ENCODE measurements at regions of chr3 and their contacts with region 1.

Region 1: DNA sequence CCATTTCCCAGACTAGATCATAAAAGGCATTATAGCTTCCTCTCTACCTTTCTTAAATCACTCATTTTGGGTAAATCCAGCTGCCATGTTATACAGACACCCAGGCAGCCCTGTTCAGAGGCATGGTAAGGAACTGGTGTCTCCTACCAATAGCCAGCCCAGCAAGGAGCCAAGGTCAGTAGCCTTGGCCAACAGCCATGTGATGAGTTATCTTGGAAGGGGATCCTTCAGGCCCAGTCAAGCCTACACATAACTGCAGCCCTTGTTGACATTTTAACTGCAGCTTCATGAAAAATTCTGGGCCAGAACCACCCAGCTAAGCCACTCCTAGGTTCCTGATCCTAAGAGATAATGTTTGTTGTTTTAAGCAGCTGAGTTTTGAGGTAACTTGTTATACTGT is 29.0 kb upstream of the ZMAT3 start:
- DNase-seq: peak; percentile 50
- ATAC-seq: peak; percentile 68
- H3K4me3 ChIP-seq: no peak overlapping the region
- H3K27ac ChIP-seq: no peak overlapping the region
- H3K4me1 ChIP-seq: 0 out of 2 replicates have a peak, but pooled peaks cover 4% of the 10 kb centered on the region
- H3K27me3 ChIP-seq: no peaks in the 10 kb centered on the region
- CTCF ChIP-seq: no peak
- POLR2A ChIP-seq: no peak
- RAD21 ChIP-seq: no peak

Region 2: GRCh38 chr3:179015551-179016020 is 85.1 kb before region 1 on chr3:
- CTCF ChIA-PET with region 1: interaction called, 4 read pairs
- POLR2A ChIA-PET with region 1: no interaction called
- dilution Hi-C with region 1: no loop called
- in situ Hi-C with region 1: no loop called
- intact Hi-C with region 1: loop called (anchors 5 kb)
- DNase-seq: peak; percentile 83
- ATAC-seq: peak; percentile 93
- H3K4me3 ChIP-seq: no peak overlapping the region
- H3K27ac ChIP-seq: no peak overlapping the region
- H3K4me1 ChIP-seq: peaks cover 3% of the 10 kb centered on the region
- H3K27me3 ChIP-seq: no peaks in the 10 kb centered on the region
- CTCF ChIP-seq: peak; percentile 89
- POLR2A ChIP-seq: no peak
- RAD21 ChIP-seq: peak; percentile 83

Region 3: GRCh38 chr3:179299999-179300613 is 199.5 kb after region 1 on chr3:
- CTCF ChIA-PET with region 1: interaction called, 3 read pairs
- POLR2A ChIA-PET with region 1: no interaction called
- dilution Hi-C with region 1: loop called (anchors 25 kb)
- in situ Hi-C with region 1: no loop called
- intact Hi-C with region 1: no loop called
- DNase-seq: no peak
- ATAC-seq: no peak
- H3K4me3 ChIP-seq: no peak overlapping the region
- H3K27ac ChIP-seq: no peak overlapping the region
- H3K4me1 ChIP-seq: no peaks in the 10 kb centered on the region
- H3K27me3 ChIP-seq: peaks cover 7% of the 10 kb centered on the region
- CTCF ChIP-seq: no peak
- POLR2A ChIP-seq: no peak
- RAD21 ChIP-seq: no peak

Region 4: DNA sequence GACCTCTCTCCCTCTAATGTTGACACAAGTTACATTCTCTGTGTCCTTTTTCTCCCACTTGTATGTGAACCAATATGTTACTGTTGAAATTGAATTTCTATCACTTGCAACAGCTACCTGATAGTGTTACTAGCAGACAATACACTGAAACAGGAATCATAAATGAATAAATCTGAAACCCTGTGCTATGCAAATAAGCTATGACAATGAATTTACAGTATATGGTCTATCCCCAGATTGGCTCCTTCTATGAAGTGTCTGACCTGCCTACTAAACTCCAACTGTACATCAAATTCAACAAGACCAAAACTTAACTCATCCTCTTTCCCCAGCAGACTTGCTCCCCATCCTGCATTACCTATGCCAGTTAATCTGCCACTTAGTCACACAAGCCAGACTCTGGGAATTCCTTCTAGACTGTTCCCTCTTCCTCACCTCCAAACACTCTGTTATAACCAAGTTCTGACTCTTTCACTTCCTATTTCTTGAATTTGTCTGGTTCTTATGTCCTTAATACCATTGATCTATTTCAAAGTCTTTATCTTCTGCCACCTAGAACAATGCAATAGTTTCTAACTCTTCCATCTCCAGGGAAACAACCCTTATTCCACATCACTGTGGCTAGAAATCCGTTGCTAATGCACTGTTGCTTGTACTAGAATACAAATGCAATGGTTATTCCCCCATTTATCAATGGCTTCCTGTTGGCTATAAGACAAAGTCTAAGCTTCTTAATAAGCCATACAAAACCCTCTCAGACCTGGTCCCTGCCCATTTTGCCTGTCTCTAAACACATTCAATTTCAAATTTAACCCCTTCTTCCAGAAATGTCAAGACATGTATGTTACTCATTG is 208.8 kb after region 1 on chr3:
- CTCF ChIA-PET with region 1: no interaction called
- POLR2A ChIA-PET with region 1: no interaction called
- dilution Hi-C with region 1: no loop called
- in situ Hi-C with region 1: loop called (anchors 10 kb)
- intact Hi-C with region 1: no loop called
- DNase-seq: no peak
- ATAC-seq: no peak
- H3K4me3 ChIP-seq: no peak overlapping the region
- H3K27ac ChIP-seq: no peak overlapping the region
- H3K4me1 ChIP-seq: no peaks in the 10 kb centered on the region
- H3K27me3 ChIP-seq: no peaks in the 10 kb centered on the region
- CTCF ChIP-seq: no peak
- POLR2A ChIP-seq: no peak
- RAD21 ChIP-seq: no peak

Measured in IMR-90 (cell line).